ENCODE measurements at regions of chr16 and their contacts with region 1.

Region 1: DNA sequence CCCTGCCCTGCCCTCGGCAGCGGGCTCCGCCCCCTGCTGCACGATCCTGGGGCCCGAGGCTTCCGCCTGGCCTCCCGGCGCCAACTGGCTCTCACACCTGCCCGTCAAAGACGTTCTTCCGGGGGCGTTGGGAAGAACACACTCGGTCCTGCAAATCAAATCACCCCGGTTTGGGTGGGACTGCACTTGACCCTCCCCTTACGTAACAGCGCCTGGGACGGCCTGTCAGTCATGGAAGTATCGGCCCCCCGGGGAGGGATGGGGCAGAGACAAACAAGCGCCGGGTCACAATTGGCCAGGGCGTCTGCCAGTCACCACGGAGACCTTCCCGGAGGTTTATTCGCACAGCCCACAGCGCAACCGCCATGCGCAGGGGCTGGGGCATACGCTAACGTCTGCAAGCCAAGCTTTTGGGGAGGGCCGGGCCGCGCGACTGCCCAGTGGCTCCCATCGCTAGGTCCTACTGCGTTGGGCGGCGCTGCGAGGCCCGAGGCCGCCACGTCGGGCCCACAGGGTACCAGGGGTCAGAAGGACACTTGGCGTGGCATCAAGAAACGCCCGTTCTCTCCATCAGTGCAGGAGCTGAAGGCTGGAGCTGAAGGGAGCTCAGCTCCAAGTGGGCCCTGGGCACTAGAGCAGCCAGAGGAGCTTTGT is 388 bp upstream of the AKTIP start:
- DNase-seq: peak; percentile 100
- H3K4me3 ChIP-seq: peak overlapping the region; percentile 74 to 90 (median 79)
- H3K27ac ChIP-seq: peak overlapping the region; percentile 42
- H3K4me1 ChIP-seq: peaks cover 24% of the 10 kb centered on the region
- H3K27me3 ChIP-seq: no peaks in the 10 kb centered on the region
- CTCF ChIP-seq: no peak

Region 2: GRCh38 chr16:53372992-53373871 is 130.2 kb before region 1 on chr16:
- CTCF ChIA-PET with region 1: no interaction called
- dilution Hi-C with region 1: no loop called
- in situ Hi-C with region 1: no loop called
- intact Hi-C with region 1: loop called (anchors 5 kb)
- DNase-seq: peak; percentile 74
- H3K4me3 ChIP-seq: peak overlapping the region; percentile 50 to 65 (median 65)
- H3K27ac ChIP-seq: no peak overlapping the region
- H3K4me1 ChIP-seq: peaks cover 12% of the 10 kb centered on the region
- H3K27me3 ChIP-seq: peaks cover 7% of the 10 kb centered on the region
- CTCF ChIP-seq: no peak

Region 3: GRCh38 chr16:53629607-53630312 is 126.4 kb after region 1 on chr16:
- CTCF ChIA-PET with region 1: no interaction called
- dilution Hi-C with region 1: no loop called
- in situ Hi-C with region 1: no loop called
- intact Hi-C with region 1: no loop called
- DNase-seq: no peak
- H3K4me3 ChIP-seq: no peak overlapping the region
- H3K27ac ChIP-seq: no peak overlapping the region
- H3K4me1 ChIP-seq: no peaks in the 10 kb centered on the region
- H3K27me3 ChIP-seq: no peaks in the 10 kb centered on the region
- CTCF ChIP-seq: no peak

Region 4: DNA sequence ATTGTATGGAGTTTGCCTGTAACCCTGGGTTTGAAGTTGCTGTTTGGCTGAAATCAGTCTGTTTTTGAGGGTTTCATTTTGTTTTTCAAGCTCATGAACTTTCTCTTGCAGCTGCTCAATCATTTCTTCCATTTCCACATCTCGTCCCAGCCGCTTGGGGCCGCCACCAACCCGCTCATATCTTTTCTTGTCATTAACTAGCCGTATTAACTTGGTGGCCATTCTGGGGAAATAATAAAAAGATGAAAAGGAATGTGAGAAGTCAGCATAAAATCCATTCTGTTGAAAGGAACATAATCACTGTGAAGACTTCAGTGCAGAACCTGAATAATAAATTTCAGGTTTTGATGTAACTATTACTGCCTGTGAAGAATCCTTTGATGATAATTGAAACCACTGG is 188.7 kb after region 1 on chr16:
- CTCF ChIA-PET with region 1: no interaction called
- dilution Hi-C with region 1: loop called (anchors 10 kb)
- in situ Hi-C with region 1: no loop called
- intact Hi-C with region 1: no loop called
- DNase-seq: no peak
- H3K4me3 ChIP-seq: no peak overlapping the region
- H3K27ac ChIP-seq: no peak overlapping the region
- H3K4me1 ChIP-seq: no peaks in the 10 kb centered on the region
- H3K27me3 ChIP-seq: no peaks in the 10 kb centered on the region
- CTCF ChIP-seq: peak; percentile 7 to 35

Region 5: GRCh38 chr16:53703590-53704444 is 200.4 kb after region 1 on chr16 and contains the starts of genes FTO and RPGRIP1L:
- CTCF ChIA-PET with region 1: no interaction called
- dilution Hi-C with region 1: loop called (anchors 10 kb)
- in situ Hi-C with region 1: no loop called
- intact Hi-C with region 1: loop called (anchors 10 kb)
- DNase-seq: peak; percentile 99
- H3K4me3 ChIP-seq: peak within 1 kb of the TSS; percentile 95 to 99 (median 98)
- H3K27ac ChIP-seq: peak within 1 kb of the TSS; percentile 84
- H3K4me1 ChIP-seq: peaks cover 13% of the 10 kb centered on the region
- H3K27me3 ChIP-seq: no peaks in the 10 kb centered on the region
- CTCF ChIP-seq: no peak
- total RNA-seq, gene FTO: 76.4 to 155 TPM
- total RNA-seq, gene RPGRIP1L: 9.9 to 11.2 TPM